ENCODE measurements at regions of chr11 and their contacts with region 1.

Region 1: DNA sequence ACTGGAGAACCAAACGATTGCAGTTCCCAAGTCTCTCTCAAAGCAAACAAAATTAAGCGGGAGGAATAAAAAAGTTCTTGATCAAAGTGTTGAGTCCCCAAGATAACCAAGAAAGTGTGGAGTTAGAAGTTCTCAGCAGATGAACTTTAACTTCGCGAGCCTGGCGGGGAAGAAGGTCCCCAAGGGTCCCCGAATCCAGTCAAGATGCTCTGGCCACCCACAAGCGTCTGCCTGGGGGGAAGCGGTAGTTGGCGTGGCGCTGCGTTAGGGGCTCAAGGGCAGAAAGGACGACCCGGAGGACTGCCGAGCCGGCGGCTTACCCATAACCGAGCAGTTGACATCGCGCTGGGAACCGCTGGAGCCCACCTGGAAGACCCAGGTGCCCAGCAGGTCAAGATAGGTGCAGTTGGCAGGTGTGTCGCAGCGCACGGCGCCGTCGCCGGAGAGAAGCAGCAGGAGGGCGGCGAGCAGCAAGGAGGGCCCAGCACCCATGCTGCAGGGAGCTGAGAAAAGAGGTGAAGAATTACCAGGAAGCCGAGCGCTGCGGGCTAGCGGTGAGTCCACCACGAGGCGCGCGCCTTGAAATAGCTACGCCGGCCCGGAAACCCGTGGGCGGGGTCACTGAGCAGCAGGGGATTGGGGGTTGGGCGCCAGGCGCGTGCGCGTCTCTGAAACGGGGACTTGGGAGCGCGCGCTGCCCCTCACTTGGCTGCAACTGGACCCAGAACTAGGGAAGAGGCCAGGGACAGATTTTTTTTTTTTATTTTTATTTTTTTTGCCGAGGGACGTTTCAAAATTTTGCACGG is at the start of gene CTSC:
- DNase-seq: no peak
- ATAC-seq: peak; percentile 82
- H3K4me3 ChIP-seq: peak within 1 kb of the TSS; percentile 99
- H3K27ac ChIP-seq: peak within 1 kb of the TSS; percentile 84
- H3K4me1 ChIP-seq: no peaks in the 10 kb centered on the region; the same call in 1 of the 2 replicates
- H3K27me3 ChIP-seq: no peaks in the 10 kb centered on the region
- CTCF ChIP-seq: no peak
- EP300 ChIP-seq: peak in 1 of 2 experiments; percentile 48; a peak in 1 of 4 replicates
- POLR2A ChIP-seq: peak; percentile 100
- RAD21 ChIP-seq: peak; percentile 20; the same call in 1 of the 2 replicates
- polyA plus RNA-seq, gene CTSC: 709 to 1,123 TPM

Region 2: GRCh38 chr11:88174709-88175568 is 162.4 kb before region 1 on chr11 and contains the start of gene RAB38:
- CTCF ChIA-PET with region 1: interaction called, 3 read pairs
- POLR2A ChIA-PET with region 1: no interaction called
- RAD21 ChIA-PET with region 1: interaction called, 3 read pairs
- SMC1A ChIA-PET with region 1: interaction called, 3 read pairs
- in situ Hi-C with region 1: no loop called
- intact Hi-C with region 1: loop called (anchors 5 kb)
- DNase-seq: no peak
- ATAC-seq: peak; percentile 71
- H3K4me3 ChIP-seq: peak within 1 kb of the TSS; percentile 72
- H3K27ac ChIP-seq: no peak within 1 kb of the TSS
- H3K4me1 ChIP-seq: peaks cover 23% of the 10 kb centered on the region
- H3K27me3 ChIP-seq: no peaks in the 10 kb centered on the region
- CTCF ChIP-seq: no peak
- EP300 ChIP-seq: peak in 1 of 2 experiments; percentile 5; a peak in 1 of 4 replicates
- POLR2A ChIP-seq: peak; percentile 46; the same call in 1 of the 2 replicates
- RAD21 ChIP-seq: no peak
- polyA plus RNA-seq, gene RAB38: 12.3 to 19.0 TPM

Region 3: GRCh38 chr11:88327061-88327460 is 10.3 kb before region 1 on chr11:
- CTCF ChIA-PET with region 1: interaction called, 17 read pairs
- POLR2A ChIA-PET with region 1: interaction called, 43 read pairs
- RAD21 ChIA-PET with region 1: interaction called, 43 read pairs
- SMC1A ChIA-PET with region 1: interaction called, 40 read pairs
- in situ Hi-C with region 1: no loop called
- intact Hi-C with region 1: no loop called
- DNase-seq: no peak
- ATAC-seq: peak; percentile 44
- H3K4me3 ChIP-seq: peak overlapping the region; percentile 23; the same call in 1 of the 2 replicates
- H3K27ac ChIP-seq: peak overlapping the region; percentile 67; the same call in 1 of the 2 replicates
- H3K4me1 ChIP-seq: peaks cover 42% of the 10 kb centered on the region
- H3K27me3 ChIP-seq: no peaks in the 10 kb centered on the region
- CTCF ChIP-seq: no peak
- EP300 ChIP-seq: peak; percentile 46 to 80; a peak in 1 of 4 replicates
- POLR2A ChIP-seq: no peak
- RAD21 ChIP-seq: no peak

Region 4: GRCh38 chr11:88435189-88435814 is 97.9 kb after region 1 on chr11:
- CTCF ChIA-PET with region 1: interaction called, 3 read pairs
- POLR2A ChIA-PET with region 1: no interaction called
- RAD21 ChIA-PET with region 1: interaction called, 3 read pairs
- SMC1A ChIA-PET with region 1: no interaction called
- in situ Hi-C with region 1: no loop called
- intact Hi-C with region 1: loop called (anchors 5 kb)
- DNase-seq: peak; percentile 77
- ATAC-seq: peak; percentile 97
- H3K4me3 ChIP-seq: no peak overlapping the region
- H3K27ac ChIP-seq: peak overlapping the region; percentile 90
- H3K4me1 ChIP-seq: peaks cover 26% of the 10 kb centered on the region
- H3K27me3 ChIP-seq: no peaks in the 10 kb centered on the region
- CTCF ChIP-seq: no peak
- EP300 ChIP-seq: peak; percentile 52; a peak in 2 of 4 replicates
- POLR2A ChIP-seq: no peak
- RAD21 ChIP-seq: peak; percentile 30